Activated B cell treated with CpG ODN at 0.5 μM for 24 hours (primary cell): ENCODE measurements at regions of chr5 and their contacts with region 1.

Region 1: GRCh38 chr5:849651-850301 is 1.0 kb downstream of the ZDHHC11 start:
- DNase-seq: no peak
- ATAC-seq: no peak
- H3K4me3 Mint-ChIP-seq: no peak overlapping the region
- H3K27ac Mint-ChIP-seq: no peak overlapping the region
- H3K4me1 Mint-ChIP-seq: peaks cover 7% of the 10 kb centered on the region
- H3K27me3 Mint-ChIP-seq: peaks cover 5% of the 10 kb centered on the region
- CTCF ChIP-seq: no peak

Region 2: DNA sequence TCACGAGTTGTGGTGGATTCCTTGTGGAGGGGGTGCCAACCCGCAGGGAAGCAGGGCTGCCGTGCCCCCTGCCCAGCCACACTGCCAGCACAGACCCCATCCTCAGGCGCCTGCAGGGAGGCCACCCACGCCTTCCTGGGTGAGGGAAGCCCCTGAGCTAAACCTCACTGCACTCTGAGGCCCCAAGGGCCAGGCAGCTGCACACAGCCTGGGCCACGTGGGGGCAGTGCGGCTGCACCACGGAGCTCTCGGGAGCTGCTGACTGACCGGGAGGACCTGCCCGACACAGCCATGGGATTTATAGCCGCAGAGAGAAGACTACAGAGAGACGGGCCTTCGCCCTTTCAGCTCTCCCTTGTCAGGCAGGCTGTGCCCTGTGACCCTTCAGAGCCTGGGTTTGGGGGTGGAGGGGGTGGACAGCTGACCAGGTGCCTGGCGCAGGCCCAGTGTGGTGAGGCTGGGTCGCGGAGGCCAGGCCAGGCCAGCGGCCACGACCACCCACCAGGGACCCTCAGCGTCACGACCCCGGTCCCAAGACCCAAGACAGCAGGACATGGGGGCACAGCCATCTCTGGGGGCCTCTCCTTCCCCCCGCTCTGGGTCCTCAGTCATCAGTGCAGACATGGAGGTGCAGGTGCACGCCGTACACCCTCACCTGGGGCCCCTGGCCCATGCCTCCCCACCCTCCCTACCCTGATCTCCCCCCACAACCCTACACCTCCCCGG is 532.5 kb before region 1 on chr5:
- CTCF ChIA-PET with region 1: no interaction called
- POLR2A ChIA-PET with region 1: no interaction called
- intact Hi-C with region 1: no loop called
- DNase-seq: peak; percentile 57
- ATAC-seq: peak; percentile 86
- H3K4me3 Mint-ChIP-seq: no peak overlapping the region
- H3K27ac Mint-ChIP-seq: no peak overlapping the region
- H3K4me1 Mint-ChIP-seq: peaks cover 21% of the 10 kb centered on the region
- H3K27me3 Mint-ChIP-seq: peaks cover 11% of the 10 kb centered on the region
- CTCF ChIP-seq: no peak

Region 3: GRCh38 chr5:746258-746761 is 103.5 kb before region 1 on chr5:
- CTCF ChIA-PET with region 1: no interaction called
- POLR2A ChIA-PET with region 1: no interaction called
- intact Hi-C with region 1: loop called (anchors 5 kb)
- DNase-seq: no peak
- ATAC-seq: no peak
- H3K4me3 Mint-ChIP-seq: no peak overlapping the region
- H3K27ac Mint-ChIP-seq: no peak overlapping the region
- H3K4me1 Mint-ChIP-seq: no peaks in the 10 kb centered on the region
- H3K27me3 Mint-ChIP-seq: no peaks in the 10 kb centered on the region
- CTCF ChIP-seq: no peak

Region 4: GRCh38 chr5:759111-759751 is 90.5 kb before region 1 on chr5:
- CTCF ChIA-PET with region 1: no interaction called
- POLR2A ChIA-PET with region 1: no interaction called
- intact Hi-C with region 1: loop called (anchors 5 kb)
- DNase-seq: peak; percentile 5
- ATAC-seq: no peak
- H3K4me3 Mint-ChIP-seq: no peak overlapping the region
- H3K27ac Mint-ChIP-seq: no peak overlapping the region
- H3K4me1 Mint-ChIP-seq: no peaks in the 10 kb centered on the region
- H3K27me3 Mint-ChIP-seq: peaks cover 10% of the 10 kb centered on the region
- CTCF ChIP-seq: no peak